Posterior cingulate gyrus (tissue), 11 donors: ENCODE measurements at regions of chr6 and their contacts with region 1.

Region 1: DNA sequence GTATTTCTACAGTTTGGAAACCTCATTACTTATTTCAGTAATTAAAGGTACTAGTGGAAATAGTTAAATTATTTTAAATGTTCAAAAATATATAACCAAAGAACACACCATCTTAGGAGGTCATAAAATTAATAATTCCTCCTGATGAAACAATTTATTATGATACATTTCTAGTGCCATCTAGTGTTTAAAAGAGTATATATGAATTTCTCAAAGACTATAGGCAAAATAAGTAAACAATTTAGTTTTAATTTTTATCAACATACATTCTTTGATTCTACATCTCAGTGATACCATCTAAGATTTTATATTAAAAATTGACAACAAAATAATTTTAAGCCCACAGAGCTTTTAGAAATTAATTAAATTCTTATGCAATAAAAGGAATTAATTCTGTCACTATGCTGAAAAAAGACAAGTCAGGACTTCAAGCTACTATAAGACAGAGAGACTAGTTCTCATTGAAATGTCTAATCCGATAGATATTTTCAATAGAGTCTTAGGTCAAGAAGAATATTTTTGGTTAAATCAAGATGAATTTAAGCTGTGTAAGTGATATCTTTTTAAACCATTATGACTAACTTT is 107.8 kb upstream of the RNF217 start:
- DNase-seq: no peak

Region 2: DNA sequence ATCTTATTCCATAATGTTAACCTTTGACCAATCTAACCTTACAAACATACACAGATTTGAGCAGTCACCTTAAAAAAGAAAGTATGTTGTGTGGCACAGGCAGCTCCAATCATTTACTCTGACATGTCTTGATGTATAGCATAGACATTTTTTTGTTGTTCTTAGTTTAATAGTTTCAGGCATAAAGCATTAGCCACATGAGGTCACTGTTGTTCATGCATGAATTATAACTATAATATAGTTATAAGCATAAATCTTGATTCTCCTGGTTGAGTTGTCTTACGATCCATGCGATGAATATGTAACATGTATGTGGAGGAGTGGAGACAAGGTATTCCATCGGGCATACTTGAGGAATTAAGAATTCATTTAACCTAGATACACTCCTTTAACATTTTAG is 1076.9 kb before region 1 on chr6:
- intact Hi-C with region 1: loop called (anchors 2 kb)
- DNase-seq: no peak

Region 3: GRCh38 chr6:125367036-125367782 is 512.8 kb after region 1 on chr6:
- intact Hi-C with region 1: no loop called
- DNase-seq: no peak